ENCODE measurements at regions of chr16 and their contacts with region 1.

Region 1: GRCh38 chr16:11114366-11115164 is 141.4 kb downstream of the SOCS1 start:
- DNase-seq: no peak
- H3K4me3 Mint-ChIP-seq: peak overlapping the region; percentile 60
- H3K27ac Mint-ChIP-seq: peak overlapping the region; percentile 91
- H3K4me1 Mint-ChIP-seq: peaks cover 67% of the 10 kb centered on the region
- H3K27me3 Mint-ChIP-seq: no peaks in the 10 kb centered on the region

Region 2: GRCh38 chr16:11076259-11077018 is 38.1 kb before region 1 on chr16:
- intact Hi-C with region 1: loop called (anchors 5 kb)
- DNase-seq: peak; percentile 70
- H3K4me3 Mint-ChIP-seq: peak overlapping the region; percentile 31
- H3K27ac Mint-ChIP-seq: peak overlapping the region; percentile 94
- H3K4me1 Mint-ChIP-seq: peaks cover 95% of the 10 kb centered on the region
- H3K27me3 Mint-ChIP-seq: no peaks in the 10 kb centered on the region

Region 3: DNA sequence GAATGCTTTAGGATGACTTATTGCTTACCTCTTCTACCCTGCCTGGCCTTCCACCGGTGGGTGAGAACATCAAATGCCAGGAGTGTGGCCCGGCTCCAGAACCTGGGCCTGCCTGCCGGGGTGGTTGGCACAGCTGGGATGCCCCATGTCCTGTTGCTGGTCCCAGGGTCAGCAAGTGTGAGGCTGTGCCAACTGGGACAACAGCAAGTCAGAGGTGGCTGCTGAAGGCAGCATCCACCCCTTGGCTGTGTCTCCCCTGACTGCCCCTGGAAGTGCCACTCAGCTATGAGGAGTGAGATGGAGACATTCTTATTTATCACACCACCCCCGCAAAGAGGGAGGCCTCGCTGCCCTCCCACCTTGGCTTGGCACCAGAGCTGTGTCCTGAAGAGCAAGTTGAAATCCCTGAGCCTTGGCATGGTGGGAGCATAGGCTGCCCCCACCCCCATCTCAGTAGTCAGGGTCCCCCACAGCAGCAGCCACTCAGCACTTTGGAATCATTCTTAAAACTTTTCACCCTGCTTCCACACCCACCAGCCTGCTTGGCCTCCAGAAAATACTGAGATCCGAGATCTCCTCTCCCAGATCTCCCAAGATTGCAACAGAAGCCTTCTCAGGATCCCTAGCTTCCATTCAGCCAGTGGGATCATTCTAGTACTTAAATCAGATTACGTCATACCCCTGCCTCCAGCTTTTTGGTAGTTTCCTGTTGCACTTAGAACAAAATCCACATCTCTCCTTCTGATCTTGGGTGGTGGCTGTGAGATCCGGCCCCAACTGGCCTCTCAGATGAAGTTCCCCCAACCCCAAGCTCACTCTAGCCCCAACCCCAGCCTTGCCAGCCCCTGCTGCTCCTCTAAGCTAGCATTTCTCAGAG is 13.9 kb after region 1 on chr16:
- intact Hi-C with region 1: loop called (anchors 2 kb)
- DNase-seq: peak; percentile 38
- H3K4me3 Mint-ChIP-seq: peak overlapping the region; percentile 60
- H3K27ac Mint-ChIP-seq: peak overlapping the region; percentile 96
- H3K4me1 Mint-ChIP-seq: peaks cover 76% of the 10 kb centered on the region
- H3K27me3 Mint-ChIP-seq: no peaks in the 10 kb centered on the region

Region 4: GRCh38 chr16:11161974-11162373 is 47.4 kb after region 1 on chr16:
- intact Hi-C with region 1: loop called (anchors 2 kb)
- DNase-seq: no peak
- H3K4me3 Mint-ChIP-seq: no peak overlapping the region
- H3K27ac Mint-ChIP-seq: peak overlapping the region; percentile 90
- H3K4me1 Mint-ChIP-seq: peaks cover 65% of the 10 kb centered on the region
- H3K27me3 Mint-ChIP-seq: no peaks in the 10 kb centered on the region